ENCODE measurements at regions of chr7 and their contacts with region 1.

Region 1: GRCh38 chr7:109522585-109522984 is 952.9 kb downstream of the DNAJB9 start:
- DNase-seq: no peak
- H3K4me3 ChIP-seq: no peak overlapping the region
- H3K27ac ChIP-seq: no peak overlapping the region
- H3K4me1 ChIP-seq: no peaks in the 10 kb centered on the region
- H3K27me3 ChIP-seq: no peaks in the 10 kb centered on the region
- CTCF ChIP-seq: no peak
- EP300 ChIP-seq: no peak
- POLR2A ChIP-seq: no peak

Region 2: DNA sequence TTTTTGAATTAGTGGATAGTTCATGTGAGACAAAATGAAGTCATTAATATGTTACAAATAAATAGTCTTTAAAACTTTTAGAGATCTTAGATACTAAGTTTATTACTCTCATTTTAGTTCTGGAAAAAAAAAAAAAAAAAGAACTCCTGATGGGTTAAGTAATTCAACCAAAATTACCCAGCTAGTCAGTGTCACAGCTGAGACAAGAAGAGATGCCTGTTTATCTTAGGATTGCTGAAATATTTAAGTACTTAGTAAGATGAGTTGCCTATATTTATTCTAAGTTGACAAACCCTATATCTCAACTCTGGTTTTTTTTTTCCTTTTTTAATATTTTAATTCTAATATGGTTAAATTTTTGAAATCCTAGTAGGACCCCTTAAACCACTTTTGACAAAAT is 787.4 kb after region 1 on chr7:
- intact Hi-C with region 1: loop called in 1 of 4 experiments (anchors 5 kb)
- DNase-seq: no peak
- H3K4me3 ChIP-seq: no peak overlapping the region
- H3K27ac ChIP-seq: no peak overlapping the region
- H3K4me1 ChIP-seq: no peaks in the 10 kb centered on the region
- H3K27me3 ChIP-seq: no peaks in the 10 kb centered on the region
- CTCF ChIP-seq: no peak
- EP300 ChIP-seq: no peak
- POLR2A ChIP-seq: no peak

Region 3: DNA sequence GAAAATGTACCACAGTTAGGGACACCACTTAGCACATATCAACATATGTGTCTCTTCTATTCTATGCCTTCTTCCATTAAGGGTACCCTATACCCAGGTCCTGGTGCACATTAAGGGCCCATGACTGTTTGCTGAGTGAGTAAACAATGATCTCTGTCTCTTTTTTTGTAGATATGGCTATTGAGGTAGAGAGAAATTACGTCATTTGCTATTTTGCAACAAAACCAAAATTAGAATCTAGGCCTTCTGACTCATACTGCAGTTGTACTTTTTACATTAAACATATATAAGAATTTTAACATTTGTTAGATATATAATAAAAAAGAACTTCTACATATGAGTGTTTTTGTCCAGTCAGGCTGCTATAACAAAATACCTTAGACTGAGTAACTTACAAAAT is 885.1 kb after region 1 on chr7:
- intact Hi-C with region 1: no loop called
- DNase-seq: no peak
- H3K4me3 ChIP-seq: no peak overlapping the region
- H3K27ac ChIP-seq: no peak overlapping the region
- H3K4me1 ChIP-seq: no peaks in the 10 kb centered on the region
- H3K27me3 ChIP-seq: no peaks in the 10 kb centered on the region
- CTCF ChIP-seq: no peak
- EP300 ChIP-seq: no peak
- POLR2A ChIP-seq: no peak